ENCODE measurements at regions of chr12 and their contacts with region 1.

Region 1: GRCh38 chr12:12008931-12009611 is 61.7 kb upstream of the BCL2L14 start:
- DNase-seq: peak; percentile 47
- H3K4me3 Mint-ChIP-seq: peak overlapping the region; percentile 60
- H3K27ac Mint-ChIP-seq: peak overlapping the region; percentile 96
- H3K4me1 Mint-ChIP-seq: peaks cover 77% of the 10 kb centered on the region
- H3K27me3 Mint-ChIP-seq: peaks cover 5% of the 10 kb centered on the region

Region 2: GRCh38 chr12:11581179-11581755 is 427.8 kb before region 1 on chr12:
- intact Hi-C with region 1: loop called (anchors 2 kb)
- DNase-seq: peak; percentile 32
- H3K4me3 Mint-ChIP-seq: no peak overlapping the region
- H3K27ac Mint-ChIP-seq: no peak overlapping the region
- H3K4me1 Mint-ChIP-seq: peaks cover 14% of the 10 kb centered on the region
- H3K27me3 Mint-ChIP-seq: peaks cover 38% of the 10 kb centered on the region

Region 3: DNA sequence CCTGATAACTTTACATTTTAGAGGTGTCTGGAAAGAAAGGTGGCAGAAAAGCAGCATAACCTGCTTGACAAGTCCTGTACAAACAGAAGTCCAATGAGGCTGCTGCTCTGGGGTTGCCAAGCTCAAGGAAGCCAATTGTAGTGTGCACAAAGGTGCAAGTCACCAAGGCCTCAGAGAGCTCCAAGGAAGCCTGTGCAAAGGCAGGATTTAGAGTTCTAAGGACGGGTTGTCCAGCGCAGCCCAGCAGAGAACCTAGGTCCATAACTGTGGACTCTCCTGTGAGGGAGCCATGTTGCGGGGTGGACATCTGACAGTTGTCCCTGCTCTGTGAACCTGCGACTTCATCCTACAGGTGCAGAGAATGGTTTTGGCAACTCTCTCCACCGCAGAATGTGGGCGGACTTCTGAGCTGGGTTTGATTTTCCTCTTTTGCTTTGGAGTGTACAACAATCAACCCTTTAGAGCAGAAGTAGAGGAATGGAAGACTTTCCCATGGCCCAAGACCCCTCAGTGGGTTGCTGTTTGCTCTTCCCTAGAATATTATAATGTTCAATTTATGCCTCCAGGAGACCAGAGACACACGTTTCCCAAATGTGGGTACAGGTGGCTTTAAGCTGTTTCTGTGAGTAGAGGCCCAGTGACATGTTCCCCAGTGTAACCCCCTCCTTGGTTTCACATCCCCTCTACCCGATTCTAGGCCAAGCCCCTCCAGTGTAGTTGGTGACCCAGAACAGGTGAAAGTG is 278.6 kb before region 1 on chr12:
- intact Hi-C with region 1: loop called (anchors 5 kb)
- DNase-seq: no peak
- H3K4me3 Mint-ChIP-seq: peak overlapping the region; percentile 28
- H3K27ac Mint-ChIP-seq: peak overlapping the region; percentile 78
- H3K4me1 Mint-ChIP-seq: peaks cover 75% of the 10 kb centered on the region
- H3K27me3 Mint-ChIP-seq: no peaks in the 10 kb centered on the region

Region 4: GRCh38 chr12:11836282-11837151 is 172.6 kb before region 1 on chr12:
- intact Hi-C with region 1: loop called (anchors 1 kb)
- DNase-seq: peak; percentile 12
- H3K4me3 Mint-ChIP-seq: no peak overlapping the region
- H3K27ac Mint-ChIP-seq: peak overlapping the region; percentile 87
- H3K4me1 Mint-ChIP-seq: peaks cover 65% of the 10 kb centered on the region
- H3K27me3 Mint-ChIP-seq: no peaks in the 10 kb centered on the region

Region 5: GRCh38 chr12:11922361-11922760 is 86.7 kb before region 1 on chr12:
- intact Hi-C with region 1: no loop called
- DNase-seq: no peak
- H3K4me3 Mint-ChIP-seq: no peak overlapping the region
- H3K27ac Mint-ChIP-seq: no peak overlapping the region
- H3K4me1 Mint-ChIP-seq: peaks cover 8% of the 10 kb centered on the region
- H3K27me3 Mint-ChIP-seq: peaks cover 30% of the 10 kb centered on the region

Region 6: DNA sequence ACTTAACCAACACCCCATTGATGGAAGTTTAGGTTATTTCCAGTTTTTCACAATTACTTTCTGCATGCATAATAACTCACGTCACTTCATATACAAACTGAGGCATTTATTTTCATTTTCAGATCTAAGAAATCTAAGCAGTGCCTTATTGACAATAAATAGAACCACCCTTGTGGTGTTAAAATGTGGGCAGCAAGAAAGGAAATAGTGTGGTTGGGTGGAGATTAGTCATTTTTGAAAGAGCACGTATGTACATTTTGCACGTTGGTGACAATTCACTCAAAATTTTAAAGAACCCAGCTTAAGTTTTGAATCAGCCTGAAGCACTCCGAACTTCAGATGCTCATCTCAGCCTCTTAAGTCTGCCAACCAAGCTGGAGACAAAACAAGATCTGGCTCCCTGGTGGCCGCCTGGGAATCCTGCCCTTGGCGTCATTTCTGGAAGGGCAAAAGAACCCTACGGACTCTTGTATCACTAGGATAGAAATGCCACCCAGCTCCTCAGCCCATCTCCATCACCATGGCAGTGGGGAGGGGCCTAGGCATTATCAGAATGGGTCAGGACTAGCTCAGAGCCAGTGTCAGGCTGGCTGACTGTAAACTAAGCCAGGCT is 27.8 kb before region 1 on chr12:
- intact Hi-C with region 1: loop called (anchors 1 kb)
- DNase-seq: peak; percentile 60
- H3K4me3 Mint-ChIP-seq: peak overlapping the region; percentile 33
- H3K27ac Mint-ChIP-seq: peak overlapping the region; percentile 98
- H3K4me1 Mint-ChIP-seq: peaks cover 63% of the 10 kb centered on the region
- H3K27me3 Mint-ChIP-seq: no peaks in the 10 kb centered on the region

Region 7: GRCh38 chr12:12696562-12697383 is 687.7 kb after region 1 on chr12:
- intact Hi-C with region 1: loop called (anchors 10 kb)
- DNase-seq: peak; percentile 90
- H3K4me3 Mint-ChIP-seq: peak overlapping the region; percentile 97
- H3K27ac Mint-ChIP-seq: peak overlapping the region; percentile 99
- H3K4me1 Mint-ChIP-seq: peaks cover 58% of the 10 kb centered on the region
- H3K27me3 Mint-ChIP-seq: no peaks in the 10 kb centered on the region